ENCODE measurements at regions of chr15 and their contacts with region 1.

Region 1: DNA sequence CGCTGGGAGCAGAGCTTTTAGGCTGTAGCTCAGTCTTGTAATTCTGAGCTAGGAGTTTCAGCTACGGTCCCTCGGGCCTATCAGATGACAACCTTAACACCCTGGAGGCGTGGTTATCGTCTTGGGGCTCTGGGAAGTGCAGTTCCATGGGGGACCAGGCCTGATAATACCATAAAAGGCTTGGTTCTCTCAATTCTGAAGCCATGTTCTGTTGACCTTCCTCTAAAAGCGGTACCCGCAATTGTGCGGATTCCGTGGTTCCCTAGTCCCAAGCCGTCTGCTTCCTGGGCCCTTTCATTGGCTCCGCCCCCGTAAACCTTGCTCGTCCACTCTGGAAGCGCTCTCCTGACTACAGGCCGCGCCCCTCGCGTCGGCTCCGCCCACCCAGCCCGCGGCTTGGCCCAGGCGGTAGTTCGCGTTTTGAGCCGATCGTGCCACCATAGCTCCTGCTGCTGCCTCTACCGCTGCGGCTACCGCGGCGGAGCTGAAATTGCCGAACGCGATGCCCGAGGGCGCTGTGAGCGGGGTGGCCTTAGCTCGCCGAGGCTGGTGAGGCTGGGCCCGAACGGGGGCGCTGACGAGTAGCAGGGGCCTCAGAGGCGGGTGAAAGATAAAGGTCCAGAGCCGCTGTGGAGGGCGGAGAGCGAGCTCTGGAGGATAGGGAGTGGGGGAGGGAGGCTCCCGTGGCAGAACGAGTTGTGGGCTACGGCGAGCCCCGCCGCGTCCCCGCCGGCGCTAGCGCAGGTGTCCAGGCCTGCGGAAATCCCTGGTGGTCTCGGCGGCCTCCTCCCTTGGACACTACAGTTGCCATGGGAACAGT is at the start of gene MAPKBP1:
- DNase-seq: peak; percentile 99
- H3K4me3 ChIP-seq: peak within 1 kb of the TSS; percentile 61 to 69 (median 64)
- H3K27ac ChIP-seq: peak within 1 kb of the TSS; percentile 89
- H3K4me1 ChIP-seq: peaks cover 37% of the 10 kb centered on the region
- H3K27me3 ChIP-seq: no peaks in the 10 kb centered on the region
- CTCF ChIP-seq: peak; percentile 54 to 79
- total RNA-seq, gene MAPKBP1: 41.3 to 109 TPM

Region 2: GRCh38 chr15:41465822-41466421 is 308.4 kb before region 1 on chr15:
- CTCF ChIA-PET with region 1: interaction called, 4 read pairs
- dilution Hi-C with region 1: no loop called
- in situ Hi-C with region 1: loop called in 1 of 2 experiments (anchors 25 kb)
- intact Hi-C with region 1: loop called (anchors 2 kb)
- DNase-seq: peak; percentile 37
- H3K4me3 ChIP-seq: no peak overlapping the region
- H3K27ac ChIP-seq: no peak overlapping the region
- H3K4me1 ChIP-seq: no peaks in the 10 kb centered on the region
- H3K27me3 ChIP-seq: no peaks in the 10 kb centered on the region
- CTCF ChIP-seq: peak; percentile 99 to 100

Region 3: DNA sequence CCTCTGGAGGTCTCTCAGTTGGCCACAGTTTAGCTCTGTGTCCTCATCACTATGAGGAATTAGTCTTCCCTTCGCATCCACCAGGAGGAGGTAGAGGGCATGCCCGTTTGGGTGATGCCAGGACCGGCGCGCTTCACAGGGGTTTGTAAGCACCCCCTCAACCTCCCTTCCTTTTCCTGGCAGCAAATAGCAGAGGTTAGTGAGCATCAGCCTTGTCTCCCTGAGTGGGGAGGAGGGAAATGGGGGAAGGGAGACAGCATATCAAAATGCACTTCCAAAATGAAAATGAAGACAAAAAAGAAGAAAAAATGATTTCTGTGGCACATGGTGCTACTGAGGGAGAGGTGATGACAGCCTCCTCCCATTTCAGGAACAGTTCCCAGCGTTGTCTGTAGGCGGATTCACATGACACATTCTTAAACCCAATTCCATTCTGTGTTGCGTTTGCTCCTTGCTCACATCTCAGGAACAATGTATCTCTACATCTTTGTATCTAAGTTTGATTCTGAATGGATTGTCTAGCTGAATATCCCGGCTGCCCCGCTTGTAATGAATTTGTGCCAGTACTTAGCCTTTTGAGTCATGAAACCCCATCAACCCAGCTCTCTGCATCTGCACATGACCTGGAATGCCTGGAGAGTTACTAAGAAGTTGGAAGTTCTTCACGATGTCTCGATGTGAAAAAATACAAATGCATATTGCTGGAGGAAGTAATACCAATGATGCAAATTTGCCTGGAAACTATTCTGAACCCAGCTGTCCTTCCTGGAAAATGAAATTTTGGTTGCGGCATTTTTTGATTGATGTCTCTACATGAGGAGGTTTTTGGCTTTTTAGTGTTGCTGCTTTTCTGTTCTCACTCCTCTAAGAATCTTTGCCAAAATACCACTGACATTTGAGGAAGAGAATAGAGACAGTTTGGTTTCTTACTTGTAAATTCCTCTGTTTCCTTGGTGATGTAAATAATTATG is 170.0 kb before region 1 on chr15:
- CTCF ChIA-PET with region 1: interaction called, 3 read pairs
- dilution Hi-C with region 1: no loop called
- in situ Hi-C with region 1: no loop called
- intact Hi-C with region 1: loop called (anchors 10 kb)
- DNase-seq: peak; percentile 67
- H3K4me3 ChIP-seq: peak overlapping the region; percentile 16 to 22 (median 16)
- H3K27ac ChIP-seq: no peak overlapping the region
- H3K4me1 ChIP-seq: peaks cover 13% of the 10 kb centered on the region
- H3K27me3 ChIP-seq: no peaks in the 10 kb centered on the region
- CTCF ChIP-seq: peak; percentile 82 to 86

Region 4: DNA sequence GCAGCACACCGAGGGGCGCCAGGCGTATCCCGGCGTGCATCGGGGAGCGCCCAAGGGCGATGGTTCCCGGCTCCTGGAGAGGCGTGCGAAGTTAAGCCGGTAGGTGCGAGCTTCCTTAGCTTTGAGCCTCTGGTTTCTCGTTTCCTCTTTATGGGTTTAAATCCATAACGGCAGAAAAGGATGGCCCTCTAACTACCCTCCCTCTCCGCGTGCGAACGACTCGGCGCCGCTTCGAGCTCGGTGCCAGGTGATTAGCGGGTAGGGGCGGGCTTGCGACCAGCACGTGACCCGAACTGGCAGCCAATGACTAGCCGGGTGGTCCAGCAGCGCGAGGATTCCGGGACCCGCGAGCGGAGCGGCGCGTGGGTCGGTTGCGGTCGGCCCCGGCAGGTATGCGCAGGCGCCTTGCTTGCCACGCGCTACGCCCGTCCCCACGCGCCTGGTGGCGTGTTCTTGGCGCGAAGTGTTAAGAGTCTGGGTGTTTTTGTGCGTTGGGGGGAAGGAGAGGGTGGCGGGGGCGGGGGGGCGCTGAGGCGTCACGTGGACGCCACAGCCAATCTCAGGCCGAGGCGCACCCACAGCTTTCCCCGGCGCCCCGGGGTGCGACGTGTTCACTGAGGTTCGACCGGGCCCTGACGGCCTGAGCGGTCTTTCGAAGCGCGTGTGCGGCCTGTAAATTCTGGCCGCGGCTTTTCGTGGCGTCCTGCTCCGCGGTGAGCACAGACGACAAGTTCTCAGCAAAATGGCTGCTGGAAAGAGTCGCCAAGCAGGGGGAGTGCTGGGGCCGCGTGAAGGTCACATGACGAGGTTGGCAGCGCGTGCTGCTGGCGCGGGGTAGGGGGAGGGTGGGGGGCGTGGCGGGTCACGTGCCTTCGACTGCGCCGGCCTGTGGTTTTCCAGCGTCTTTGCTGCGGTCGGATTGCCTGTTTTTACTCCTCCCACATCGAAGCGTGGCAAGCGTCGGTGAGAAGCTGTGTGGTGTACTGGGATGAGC is 152.8 kb before region 1 on chr15:
- CTCF ChIA-PET with region 1: no interaction called
- dilution Hi-C with region 1: no loop called
- in situ Hi-C with region 1: no loop called
- intact Hi-C with region 1: no loop called
- DNase-seq: peak; percentile 65
- H3K4me3 ChIP-seq: peak overlapping the region; percentile 38 to 60 (median 51)
- H3K27ac ChIP-seq: no peak overlapping the region
- H3K4me1 ChIP-seq: peaks cover 7% of the 10 kb centered on the region
- H3K27me3 ChIP-seq: no peaks in the 10 kb centered on the region
- CTCF ChIP-seq: no peak

Region 5: GRCh38 chr15:41806291-41807181 is 32.3 kb after region 1 on chr15:
- CTCF ChIA-PET with region 1: interaction called, 32 read pairs
- dilution Hi-C with region 1: loop called (anchors 5 kb)
- in situ Hi-C with region 1: loop called (anchors 5 kb)
- intact Hi-C with region 1: loop called (anchors 1 kb)
- DNase-seq: peak; percentile 88
- H3K4me3 ChIP-seq: no peak overlapping the region
- H3K27ac ChIP-seq: peak overlapping the region; percentile 98
- H3K4me1 ChIP-seq: peaks cover 71% of the 10 kb centered on the region
- H3K27me3 ChIP-seq: no peaks in the 10 kb centered on the region
- CTCF ChIP-seq: peak; percentile 32 to 71

Region 6: DNA sequence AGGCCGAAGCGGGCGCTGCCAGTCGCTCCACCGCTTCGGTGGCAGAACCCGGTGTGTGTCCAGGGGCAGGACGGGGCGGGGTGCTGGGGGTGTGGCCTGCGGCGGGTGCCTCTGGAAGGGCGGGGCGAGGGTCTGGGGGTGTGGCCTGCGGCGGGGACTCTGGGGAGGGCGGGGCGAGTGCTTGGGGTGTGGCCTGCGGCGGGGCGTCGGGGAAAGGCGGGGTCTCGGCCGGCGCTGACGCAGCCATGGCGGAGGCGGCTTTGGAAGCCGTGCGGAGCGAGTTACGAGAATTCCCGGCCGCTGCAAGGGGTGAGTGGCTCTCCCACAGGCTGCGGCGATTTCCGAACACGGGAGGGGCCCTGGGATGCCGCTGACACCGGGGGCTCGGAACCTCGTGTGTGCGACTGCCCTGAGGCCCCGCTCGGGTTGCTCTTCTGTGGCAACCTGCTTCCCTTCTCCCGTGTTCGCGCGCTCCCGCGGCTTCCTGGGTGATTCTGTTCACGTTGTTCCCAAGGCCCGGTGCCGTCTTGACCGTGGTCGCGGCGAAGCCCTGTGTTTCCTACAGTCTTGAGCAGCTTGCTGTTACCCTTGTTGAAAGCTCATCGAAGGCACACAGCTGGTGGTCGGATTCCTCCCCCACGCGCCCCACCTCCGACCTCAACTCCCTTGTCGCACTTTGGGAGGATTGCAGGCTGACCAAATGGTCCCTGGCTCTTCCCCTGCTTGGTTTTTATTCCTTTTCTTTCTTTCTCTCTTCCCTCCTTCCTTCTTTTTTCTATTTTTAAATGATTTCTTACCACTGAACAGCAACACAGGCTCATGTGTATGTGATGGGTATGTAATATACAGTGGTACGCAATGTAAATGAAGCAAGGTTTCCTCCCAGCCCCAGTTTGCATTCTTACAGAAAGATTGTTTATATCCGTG is 53.9 kb after region 1 on chr15 and contains the start of gene JMJD7:
- CTCF ChIA-PET with region 1: interaction called, 4 read pairs
- dilution Hi-C with region 1: no loop called
- in situ Hi-C with region 1: no loop called
- intact Hi-C with region 1: loop called (anchors 1 kb)
- DNase-seq: peak; percentile 83
- H3K4me3 ChIP-seq: peak within 1 kb of the TSS; percentile 69 to 93 (median 73)
- H3K27ac ChIP-seq: peak within 1 kb of the TSS; percentile 84
- H3K4me1 ChIP-seq: peaks cover 55% of the 10 kb centered on the region
- H3K27me3 ChIP-seq: no peaks in the 10 kb centered on the region
- CTCF ChIP-seq: no peak
- total RNA-seq, gene JMJD7: 5.8 to 22.3 TPM

Region 7: DNA sequence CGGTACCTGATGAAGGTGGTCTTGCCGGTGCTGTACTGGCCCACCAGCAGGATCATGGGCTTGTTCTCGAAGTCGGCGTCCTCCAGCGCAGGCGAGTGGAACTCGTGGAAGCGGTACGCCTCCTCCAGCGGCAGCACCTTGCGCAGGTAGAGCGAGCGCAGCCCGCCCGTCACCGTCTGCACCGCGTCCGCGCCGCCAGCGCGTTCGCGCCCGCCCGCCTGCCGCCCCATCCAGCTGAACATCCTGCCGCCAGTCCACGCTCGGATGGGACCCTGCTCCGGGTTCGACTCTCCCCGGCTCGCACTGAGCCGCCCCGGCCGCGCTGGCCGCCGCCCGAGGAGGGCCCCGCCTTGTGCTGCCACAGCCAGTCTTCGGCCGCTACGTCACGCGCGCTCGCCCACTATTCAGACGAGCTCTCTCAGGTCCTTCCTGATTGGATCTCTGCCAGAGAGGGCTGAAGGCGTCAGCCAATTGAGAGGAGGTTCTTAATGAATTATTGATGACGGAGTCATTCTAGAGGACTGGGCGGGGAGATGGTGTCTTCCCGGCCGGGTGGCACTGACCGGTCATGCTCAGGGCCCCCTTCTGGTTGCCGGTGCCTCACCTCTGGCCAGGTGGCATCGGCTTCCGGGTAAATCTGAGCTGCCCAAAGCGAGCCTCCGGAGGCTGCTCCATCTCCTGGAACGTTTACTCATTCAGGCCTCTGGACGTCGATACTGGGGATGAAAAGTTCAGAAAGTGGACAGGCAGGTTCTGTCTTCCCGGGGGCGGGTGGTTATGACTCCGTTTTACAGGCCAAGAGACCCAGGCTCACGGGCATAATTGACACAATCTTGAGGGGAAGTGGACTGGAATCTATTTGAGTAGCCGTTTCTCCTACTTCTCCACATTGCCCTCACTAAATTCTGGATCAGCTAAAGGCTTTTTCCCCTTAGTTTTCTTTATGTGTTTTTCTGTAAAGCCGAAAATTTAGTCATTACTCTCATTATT is 198.3 kb after region 1 on chr15 and contains the start of gene EHD4:
- CTCF ChIA-PET with region 1: interaction called, 3 read pairs
- dilution Hi-C with region 1: no loop called
- in situ Hi-C with region 1: no loop called
- intact Hi-C with region 1: loop called (anchors 1 kb)
- DNase-seq: peak; percentile 99
- H3K4me3 ChIP-seq: peak within 1 kb of the TSS; percentile 87 to 98 (median 98)
- H3K27ac ChIP-seq: peak within 1 kb of the TSS; percentile 74
- H3K4me1 ChIP-seq: peaks cover 37% of the 10 kb centered on the region
- H3K27me3 ChIP-seq: no peaks in the 10 kb centered on the region
- CTCF ChIP-seq: peak in 1 of 2 donors; percentile 50
- total RNA-seq, gene EHD4: 53.6 to 65.0 TPM

Region 8: DNA sequence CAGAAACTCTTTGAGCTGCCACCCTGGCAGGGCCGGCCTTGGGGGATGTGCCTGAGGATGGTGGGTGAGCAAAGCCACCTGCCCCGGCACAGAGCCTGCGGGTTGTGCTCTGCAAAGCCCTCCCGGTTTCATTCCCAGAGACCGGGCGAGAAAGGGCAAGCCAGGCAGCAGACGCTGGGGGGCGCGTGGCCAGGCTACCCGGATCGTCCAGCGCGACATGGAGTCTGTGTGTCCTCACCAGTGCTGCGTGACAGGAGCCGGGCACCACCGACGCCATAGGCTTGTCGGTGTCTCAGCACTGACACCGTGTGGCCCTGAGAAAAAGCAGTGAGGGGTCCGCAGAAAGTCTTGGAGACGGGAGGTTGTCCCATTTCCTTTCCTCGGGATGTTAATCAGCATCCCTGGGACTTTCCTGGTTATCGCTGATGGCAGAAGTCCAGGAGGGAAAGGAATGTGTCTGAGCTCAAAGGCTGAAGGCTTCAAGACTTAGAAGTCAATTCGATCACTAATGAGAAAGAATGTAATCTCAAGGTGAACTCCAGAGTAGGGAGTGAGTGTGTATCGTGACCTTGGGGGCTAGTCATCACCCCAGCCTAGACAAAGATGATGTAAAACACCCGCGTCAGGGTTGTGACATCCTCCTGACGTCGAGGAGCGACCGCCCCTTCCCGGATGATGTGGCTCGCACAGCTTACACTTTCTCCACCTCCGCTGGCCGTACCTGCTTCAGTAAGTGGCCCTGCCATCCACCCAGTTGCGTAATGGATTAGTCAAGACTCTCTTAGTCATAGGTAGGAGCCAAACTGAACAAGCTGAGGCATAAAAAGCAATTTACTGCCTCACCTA is 282.9 kb after region 1 on chr15:
- CTCF ChIA-PET with region 1: no interaction called
- dilution Hi-C with region 1: no loop called
- in situ Hi-C with region 1: no loop called
- intact Hi-C with region 1: loop called (anchors 1 kb)
- DNase-seq: peak; percentile 100
- H3K4me3 ChIP-seq: peak overlapping the region; percentile 36 to 52 (median 50)
- H3K27ac ChIP-seq: peak overlapping the region; percentile 93
- H3K4me1 ChIP-seq: peaks cover 19% of the 10 kb centered on the region
- H3K27me3 ChIP-seq: no peaks in the 10 kb centered on the region
- CTCF ChIP-seq: peak; percentile 43 to 77